GM13977 (cell line): ENCODE measurements at regions of chr1 and their contacts with region 1.

Region 1: DNA sequence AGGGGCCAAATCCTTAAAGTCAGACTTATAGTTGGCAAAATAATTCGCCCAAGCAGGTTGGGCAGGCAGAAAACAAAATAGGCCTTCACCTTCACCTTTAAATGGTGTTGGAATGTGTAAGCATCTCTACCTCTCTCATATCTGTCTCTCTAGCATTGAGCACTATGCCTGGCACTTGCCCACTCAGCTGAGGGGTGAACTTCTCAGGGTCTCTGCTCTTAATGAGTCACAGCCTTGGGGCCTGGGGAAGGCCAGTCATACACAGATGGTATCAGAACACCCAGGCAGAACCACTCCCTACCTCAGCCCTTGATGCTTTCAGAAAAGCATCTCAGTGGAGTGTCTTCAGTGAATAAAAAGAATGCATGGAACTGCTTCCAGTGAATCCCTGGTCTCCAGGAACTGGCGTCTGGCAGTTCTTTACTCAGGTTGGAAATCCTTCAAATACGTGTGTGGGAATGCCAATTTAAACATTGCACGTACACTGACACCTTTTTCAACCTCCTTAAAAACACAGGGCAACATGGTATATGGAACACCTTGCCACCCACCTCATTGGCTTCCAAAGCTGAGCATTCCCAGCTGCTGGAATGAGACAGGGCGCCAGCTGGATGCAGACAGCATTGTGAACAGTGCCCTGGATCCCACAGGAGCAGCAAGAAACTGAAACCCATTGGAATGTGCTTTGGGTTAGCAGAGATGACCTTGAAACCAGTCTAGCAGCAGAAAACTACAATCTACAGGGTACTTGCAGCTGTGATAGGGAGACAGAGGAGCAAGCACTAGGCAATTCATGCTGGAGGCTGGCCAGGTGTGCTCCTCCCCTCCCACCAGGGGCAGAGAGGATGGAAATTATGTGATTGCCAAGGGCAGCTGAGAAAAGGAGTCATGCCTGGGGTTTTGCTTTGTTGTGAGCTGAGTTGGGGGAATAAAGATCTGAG is 30.0 kb downstream of the ZNF697 start:
- DNase-seq: no peak
- CTCF ChIP-seq: no peak

Region 2: DNA sequence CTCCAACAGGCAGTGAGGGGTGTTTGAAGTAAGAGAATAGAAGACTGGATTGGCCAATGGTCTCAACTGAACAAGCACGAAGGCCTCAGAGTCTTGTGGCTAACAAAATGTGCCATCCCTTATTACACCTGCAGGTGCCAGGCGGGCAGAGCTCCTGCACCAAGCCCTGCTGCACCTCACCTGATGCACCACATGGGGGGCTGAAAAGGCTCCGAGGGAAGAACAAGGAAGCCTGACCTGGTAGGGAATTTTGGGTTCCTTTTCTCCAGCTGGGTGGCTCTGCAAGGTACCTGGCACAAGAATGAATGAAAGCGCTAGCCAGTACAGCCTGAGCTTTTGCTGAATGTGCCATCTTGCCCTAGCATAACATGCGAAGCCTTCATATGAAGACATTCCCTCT is 101.3 kb before region 1 on chr1:
- in situ Hi-C with region 1: no loop called
- DNase-seq: no peak
- CTCF ChIP-seq: no peak

Region 3: DNA sequence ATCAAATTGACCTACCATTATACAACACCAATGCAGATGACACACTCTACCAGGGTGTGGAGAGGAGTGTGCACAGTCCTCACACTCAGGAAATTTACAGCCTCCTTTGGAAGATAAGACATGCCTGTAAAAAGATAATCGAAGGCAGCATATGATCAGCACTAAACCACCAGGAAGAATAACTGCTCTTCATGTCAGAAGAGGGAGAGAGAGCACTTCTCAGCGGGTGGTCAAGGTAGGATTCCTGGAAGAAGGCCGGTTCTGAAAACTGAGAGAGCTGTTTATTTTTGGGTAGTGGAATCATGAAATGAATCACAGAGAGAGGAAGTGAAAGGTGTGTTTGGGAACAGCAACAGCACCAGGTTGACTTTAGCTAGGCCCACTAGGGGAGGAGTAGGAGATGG is 44.0 kb after region 1 on chr1:
- in situ Hi-C with region 1: loop called (anchors 5 kb)
- DNase-seq: no peak
- CTCF ChIP-seq: no peak

Region 4: GRCh38 chr1:119686649-119687048 is 68.6 kb after region 1 on chr1:
- in situ Hi-C with region 1: no loop called
- DNase-seq: no peak
- CTCF ChIP-seq: no peak